ENCODE measurements at regions of chr9 and their contacts with region 1.

Region 1: DNA sequence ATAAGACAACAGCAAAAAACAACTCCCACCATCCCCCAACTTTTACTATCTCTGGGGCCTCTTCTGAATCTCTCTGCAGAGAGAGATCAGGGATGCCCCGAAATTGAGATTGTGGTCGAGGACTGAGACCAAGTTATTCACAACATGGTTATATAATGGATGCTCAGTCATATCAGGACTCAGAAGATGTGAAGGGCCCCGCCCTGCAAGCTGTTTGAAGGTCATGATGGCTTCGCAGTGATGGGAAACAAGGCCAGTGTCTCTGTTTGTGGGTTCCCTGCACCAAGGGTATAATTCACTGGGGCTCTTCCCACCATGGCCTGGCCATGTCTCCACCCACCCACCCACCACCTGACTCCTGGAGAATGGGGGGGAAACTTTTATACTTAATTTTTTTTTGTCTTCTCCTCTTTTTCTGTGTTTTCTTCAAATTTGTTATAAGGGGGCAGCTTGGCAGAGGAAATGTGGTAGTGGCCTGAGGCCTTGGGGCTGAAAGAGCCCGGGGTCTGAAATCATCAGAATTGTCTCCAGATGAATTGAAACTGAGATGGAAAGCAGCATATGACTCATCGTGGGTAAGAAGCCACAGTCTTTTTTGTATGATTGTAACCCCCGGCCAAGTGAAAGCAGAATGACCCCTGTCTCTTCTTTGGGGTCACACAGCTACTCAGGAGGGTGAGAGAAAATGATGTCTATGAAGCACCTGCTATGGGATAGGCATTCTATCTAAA is 15.0 kb upstream of the TEX48 start:
- DNase-seq: peak; percentile 94
- ATAC-seq: peak; percentile 67
- H3K4me3 Mint-ChIP-seq: peak overlapping the region; percentile 63
- H3K27ac Mint-ChIP-seq: peak overlapping the region; percentile 95
- H3K4me1 Mint-ChIP-seq: peaks cover 78% of the 10 kb centered on the region
- H3K27me3 Mint-ChIP-seq: no peaks in the 10 kb centered on the region
- CTCF ChIP-seq: no peak

Region 2: DNA sequence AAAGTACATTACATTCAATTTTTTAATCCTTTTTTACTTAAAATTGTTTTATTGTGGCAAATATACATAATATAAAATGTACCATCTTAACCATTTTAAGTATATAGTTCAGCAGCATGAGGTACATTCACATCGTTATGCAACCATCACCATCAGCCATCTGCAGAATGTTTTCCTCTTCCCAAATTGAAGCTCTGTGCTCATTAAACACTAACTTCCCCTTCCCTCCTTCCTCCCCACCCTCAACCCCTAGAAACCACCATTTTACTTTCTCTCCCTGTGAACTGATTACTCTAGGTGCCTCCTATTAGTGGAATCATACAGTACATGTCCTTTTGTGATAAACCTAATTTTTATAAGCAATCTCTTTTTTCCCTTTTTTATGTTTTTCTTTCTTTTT is 55.0 kb before region 1 on chr9:
- CTCF ChIA-PET with region 1: no interaction called
- POLR2A ChIA-PET with region 1: no interaction called
- intact Hi-C with region 1: no loop called
- DNase-seq: no peak
- ATAC-seq: no peak
- H3K4me3 Mint-ChIP-seq: no peak overlapping the region
- H3K27ac Mint-ChIP-seq: peak overlapping the region; percentile 61
- H3K4me1 Mint-ChIP-seq: peaks cover 6% of the 10 kb centered on the region
- H3K27me3 Mint-ChIP-seq: no peaks in the 10 kb centered on the region
- CTCF ChIP-seq: no peak

Region 3: DNA sequence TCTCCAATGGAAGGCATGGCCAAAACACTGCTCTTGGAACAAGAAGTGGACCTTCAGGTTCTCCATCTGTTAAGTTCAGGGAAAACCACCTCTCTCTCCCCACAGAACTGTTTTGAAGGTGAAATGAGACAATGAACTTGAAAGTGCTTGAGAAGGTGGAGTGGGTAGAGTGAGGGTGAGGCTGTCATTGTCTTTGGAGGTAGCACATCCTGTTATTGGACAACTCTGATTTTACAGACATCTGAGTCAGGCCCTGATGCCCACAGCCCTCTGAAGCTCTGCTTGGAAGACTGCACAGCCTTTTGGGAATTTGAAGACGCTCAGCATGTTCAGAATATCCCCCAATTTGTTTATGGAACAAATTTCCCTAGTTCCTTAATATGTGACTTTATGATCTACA is 12.7 kb after region 1 on chr9:
- CTCF ChIA-PET with region 1: interaction called, 6 read pairs
- POLR2A ChIA-PET with region 1: interaction called, 42 read pairs
- intact Hi-C with region 1: no loop called
- DNase-seq: no peak
- ATAC-seq: peak; percentile 84
- H3K4me3 Mint-ChIP-seq: no peak overlapping the region
- H3K27ac Mint-ChIP-seq: no peak overlapping the region
- H3K4me1 Mint-ChIP-seq: peaks cover 32% of the 10 kb centered on the region
- H3K27me3 Mint-ChIP-seq: no peaks in the 10 kb centered on the region
- CTCF ChIP-seq: no peak

Region 4: DNA sequence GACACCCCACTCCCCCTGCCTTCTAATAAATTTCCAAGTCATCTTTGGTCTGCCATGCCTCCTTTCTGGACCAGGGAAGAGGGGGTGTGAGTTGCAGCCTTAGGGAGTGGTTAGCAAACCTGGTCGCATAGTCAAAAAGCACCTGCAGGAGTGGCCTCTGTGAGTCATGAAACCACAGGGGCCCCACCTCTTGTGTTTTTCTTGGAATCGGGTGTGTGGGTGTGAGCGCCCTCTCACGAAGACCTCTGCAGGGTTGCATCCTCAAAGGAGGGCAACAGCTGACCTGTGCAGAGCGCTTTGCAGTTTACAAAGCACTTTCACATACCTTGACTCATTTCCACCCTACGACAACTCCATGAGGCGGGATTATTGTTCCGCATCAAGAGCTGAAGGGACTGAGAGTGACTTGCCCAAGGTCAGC is 21.8 kb after region 1 on chr9:
- CTCF ChIA-PET with region 1: interaction called, 10 read pairs
- POLR2A ChIA-PET with region 1: interaction called, 55 read pairs
- intact Hi-C with region 1: loop called (anchors 1 kb)
- DNase-seq: peak; percentile 98
- ATAC-seq: peak; percentile 95
- H3K4me3 Mint-ChIP-seq: peak overlapping the region; percentile 36
- H3K27ac Mint-ChIP-seq: peak overlapping the region; percentile 92
- H3K4me1 Mint-ChIP-seq: peaks cover 56% of the 10 kb centered on the region
- H3K27me3 Mint-ChIP-seq: peaks cover 4% of the 10 kb centered on the region
- CTCF ChIP-seq: no peak

Region 5: GRCh38 chr9:114738581-114739316 is 41.8 kb after region 1 on chr9:
- CTCF ChIA-PET with region 1: interaction called, 19 read pairs
- POLR2A ChIA-PET with region 1: interaction called, 17 read pairs
- intact Hi-C with region 1: loop called (anchors 1 kb)
- DNase-seq: peak; percentile 80
- ATAC-seq: peak; percentile 71
- H3K4me3 Mint-ChIP-seq: no peak overlapping the region
- H3K27ac Mint-ChIP-seq: peak overlapping the region; percentile 94
- H3K4me1 Mint-ChIP-seq: peaks cover 53% of the 10 kb centered on the region
- H3K27me3 Mint-ChIP-seq: no peaks in the 10 kb centered on the region
- CTCF ChIP-seq: peak; percentile 75

Region 6: GRCh38 chr9:114754581-114754980 is 57.6 kb after region 1 on chr9:
- CTCF ChIA-PET with region 1: no interaction called
- POLR2A ChIA-PET with region 1: no interaction called
- intact Hi-C with region 1: no loop called
- DNase-seq: peak; percentile 43
- ATAC-seq: peak; percentile 69
- H3K4me3 Mint-ChIP-seq: no peak overlapping the region
- H3K27ac Mint-ChIP-seq: peak overlapping the region; percentile 31
- H3K4me1 Mint-ChIP-seq: peaks cover 18% of the 10 kb centered on the region
- H3K27me3 Mint-ChIP-seq: no peaks in the 10 kb centered on the region
- CTCF ChIP-seq: no peak

Region 7: GRCh38 chr9:114930056-114930812 is 233.3 kb after region 1 on chr9 and contains the start of gene TNFSF8:
- CTCF ChIA-PET with region 1: interaction called, 5 read pairs
- POLR2A ChIA-PET with region 1: interaction called, 29 read pairs
- intact Hi-C with region 1: no loop called
- DNase-seq: peak; percentile 91
- ATAC-seq: peak; percentile 87
- H3K4me3 Mint-ChIP-seq: peak within 1 kb of the TSS; percentile 89
- H3K27ac Mint-ChIP-seq: peak within 1 kb of the TSS; percentile 98
- H3K4me1 Mint-ChIP-seq: peaks cover 47% of the 10 kb centered on the region
- H3K27me3 Mint-ChIP-seq: no peaks in the 10 kb centered on the region
- CTCF ChIP-seq: no peak
- total RNA-seq, gene TNFSF8: 21.7 to 23.9 TPM